Activated naive CD4-positive, alpha-beta T cell treated with anti-CD3 and anti-CD28 coated beads, Interleukin-2, amount 10 ng/mL, durations not matched to agents 7 days and 5 days (primary cell): ENCODE measurements at regions of chr11 and their contacts with region 1.

Region 1: DNA sequence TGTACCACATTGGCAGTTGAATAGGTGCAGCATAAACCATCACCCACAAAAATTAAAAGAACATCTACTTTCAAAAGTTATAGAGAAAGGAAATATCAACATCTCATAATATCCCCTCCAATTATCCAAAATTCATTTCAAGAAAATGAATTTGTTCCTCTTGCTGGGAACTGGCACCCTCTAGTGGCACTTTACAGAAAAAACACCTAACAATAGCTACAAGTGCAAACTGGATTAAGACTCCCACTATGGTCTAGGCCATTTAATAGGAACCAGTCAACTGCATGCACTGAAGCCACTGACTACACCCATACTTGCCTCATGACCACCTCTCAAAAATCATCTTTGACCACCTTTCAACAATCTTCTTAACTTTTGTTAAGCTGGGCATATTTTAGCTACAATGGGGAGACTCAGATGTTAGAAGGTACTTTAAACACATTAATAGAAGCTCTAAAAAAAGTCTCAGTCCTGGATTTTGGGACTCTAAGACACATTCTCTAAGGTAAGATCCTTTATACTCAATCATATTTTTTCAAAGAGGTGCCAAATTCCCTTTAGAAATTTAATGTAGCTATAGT is 17.3 kb downstream of the TRAF6 start:
- DNase-seq: peak; percentile 48
- H3K4me3 Mint-ChIP-seq: no peak overlapping the region
- H3K27ac Mint-ChIP-seq: no peak overlapping the region
- H3K4me1 Mint-ChIP-seq: peaks cover 14% of the 10 kb centered on the region
- H3K27me3 Mint-ChIP-seq: no peaks in the 10 kb centered on the region

Region 2: DNA sequence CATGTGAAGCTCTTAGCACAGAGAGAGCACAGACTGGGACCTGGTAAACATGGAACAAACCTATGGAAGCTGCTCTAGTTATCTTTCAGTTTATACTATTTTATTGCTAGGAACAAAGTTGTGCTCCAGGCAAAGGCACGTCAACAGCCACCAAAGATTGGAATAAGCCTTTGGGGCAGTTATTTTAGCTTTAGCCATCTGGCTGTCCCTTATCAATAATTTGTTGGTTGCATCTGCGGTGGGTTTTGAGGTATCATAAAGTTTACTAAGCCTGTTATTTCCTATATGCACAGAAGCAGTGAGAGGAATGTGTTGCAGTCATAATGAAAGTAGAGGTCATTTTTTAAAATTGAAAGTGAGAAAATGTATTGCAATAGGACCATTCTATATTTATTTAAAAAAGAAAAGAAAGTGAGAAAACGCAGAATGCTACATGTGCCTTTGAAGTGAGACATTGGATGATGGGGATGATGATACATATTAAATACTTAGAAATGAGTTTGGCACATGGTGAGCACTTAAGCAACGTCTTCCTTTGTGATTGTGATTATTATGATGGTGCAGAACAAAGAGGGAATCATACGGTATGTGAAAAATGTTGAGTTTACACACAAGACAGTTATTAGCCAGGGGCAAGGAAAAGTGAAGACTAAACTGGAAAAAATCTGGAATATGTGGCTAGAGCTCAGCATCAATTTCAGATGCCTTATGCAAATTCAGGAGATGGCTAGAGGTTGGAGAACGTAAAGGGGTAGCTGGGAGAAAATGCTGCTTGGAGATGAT is 138.4 kb before region 1 on chr11:
- CTCF ChIA-PET with region 1: interaction called, 31 read pairs
- DNase-seq: no peak
- H3K4me3 Mint-ChIP-seq: no peak overlapping the region
- H3K27ac Mint-ChIP-seq: no peak overlapping the region
- H3K4me1 Mint-ChIP-seq: peaks cover 50% of the 10 kb centered on the region
- H3K27me3 Mint-ChIP-seq: peaks cover 15% of the 10 kb centered on the region

Region 3: DNA sequence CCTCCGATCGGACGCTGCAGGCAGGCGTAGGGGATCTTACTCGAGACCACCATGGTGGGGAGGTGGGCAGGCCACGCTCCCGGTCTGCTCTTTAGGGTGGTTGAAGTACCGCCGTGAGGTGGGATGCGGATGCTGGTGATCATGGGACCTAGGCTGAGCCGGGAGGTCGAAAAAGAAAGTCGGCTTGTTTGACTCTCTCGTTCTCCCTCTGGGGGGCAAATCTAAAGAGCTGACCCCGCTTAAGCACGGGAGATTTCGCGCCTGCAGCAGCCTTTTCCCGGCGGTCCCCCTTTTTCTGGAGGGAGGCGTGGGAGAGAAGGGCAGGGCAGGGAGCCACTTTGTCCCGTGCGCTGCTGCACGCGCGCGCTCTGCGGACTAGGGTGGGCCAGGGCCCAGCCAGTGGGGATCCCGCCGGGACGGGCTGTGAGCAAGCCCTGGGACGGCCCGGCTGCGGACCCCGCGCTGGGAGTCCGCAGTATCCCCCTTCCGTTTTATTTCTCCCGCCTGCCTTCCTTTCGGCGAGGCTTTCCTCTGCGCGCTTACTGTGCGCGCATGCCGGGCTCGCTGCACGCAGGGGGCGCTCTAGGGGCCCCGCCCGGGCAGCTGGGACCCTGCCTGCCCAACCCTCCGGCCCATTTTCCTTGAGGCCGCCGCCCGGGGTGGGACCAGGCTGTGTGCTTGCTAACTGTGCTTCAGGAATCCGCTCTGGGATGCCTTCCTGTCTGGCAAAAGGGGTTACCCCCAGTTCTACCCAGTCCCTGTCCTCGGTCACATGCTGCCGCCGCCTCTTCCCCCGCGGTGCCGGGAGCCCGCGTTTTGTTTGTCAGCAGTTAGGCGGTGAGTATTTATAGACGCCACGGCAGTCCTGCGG is 115.7 kb before region 1 on chr11:
- CTCF ChIA-PET with region 1: interaction called, 12 read pairs
- DNase-seq: peak; percentile 61
- H3K4me3 Mint-ChIP-seq: peak overlapping the region; percentile 82
- H3K27ac Mint-ChIP-seq: peak overlapping the region; percentile 67
- H3K4me1 Mint-ChIP-seq: peaks cover 32% of the 10 kb centered on the region
- H3K27me3 Mint-ChIP-seq: peaks cover 74% of the 10 kb centered on the region

Region 4: GRCh38 chr11:36509694-36510566 is 17.1 kb after region 1 on chr11 and contains the start of gene TRAF6:
- CTCF ChIA-PET with region 1: interaction called, 17 read pairs
- DNase-seq: peak; percentile 90
- H3K4me3 Mint-ChIP-seq: peak within 1 kb of the TSS; percentile 99
- H3K27ac Mint-ChIP-seq: peak within 1 kb of the TSS; percentile 92
- H3K4me1 Mint-ChIP-seq: peaks cover 30% of the 10 kb centered on the region
- H3K27me3 Mint-ChIP-seq: peaks cover 10% of the 10 kb centered on the region